ENCODE measurements at regions of chr4 and their contacts with region 1.

Region 1: DNA sequence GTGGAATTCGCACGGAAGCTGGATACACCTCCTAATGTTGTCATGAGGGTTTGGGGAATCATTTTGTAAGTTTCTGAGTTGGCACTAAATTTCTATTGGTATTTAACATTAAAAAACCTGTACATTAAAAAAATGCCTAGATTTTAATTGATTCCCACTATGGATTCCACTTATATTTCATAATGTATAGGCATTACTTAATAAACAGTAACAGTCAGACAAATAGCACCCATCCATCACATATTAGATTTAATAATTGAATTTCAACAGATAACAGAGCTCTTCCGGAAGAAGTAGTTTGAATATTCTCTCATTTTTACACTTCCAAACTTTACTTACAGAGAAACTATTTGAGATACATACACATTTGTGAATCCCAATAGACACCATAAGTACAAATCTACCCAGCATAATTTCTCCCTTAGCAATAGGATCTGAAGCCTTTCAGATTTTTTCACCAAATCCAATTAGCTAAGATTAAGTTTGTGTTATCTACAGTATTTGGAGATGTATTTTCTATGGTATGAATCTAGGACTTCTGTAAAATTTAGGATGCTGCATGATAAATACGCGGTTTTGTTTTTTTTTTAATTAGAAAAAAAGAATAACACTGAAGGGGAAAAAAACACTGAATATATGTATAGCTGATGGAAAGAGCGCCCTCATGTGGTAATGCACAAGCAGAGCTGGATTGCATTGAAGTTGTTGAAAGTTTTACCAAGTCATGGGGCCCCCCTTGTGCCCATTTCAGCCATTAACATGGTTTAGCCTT is 12.2 kb upstream of the ODAM start:
- DNase-seq: peak; percentile 57 to 71
- H3K4me3 ChIP-seq: no peak overlapping the region
- H3K4me3 Mint-ChIP-seq: peak overlapping the region; percentile 68
- H3K27ac Mint-ChIP-seq: peak overlapping the region; percentile 90
- H3K4me1 ChIP-seq: peaks cover 39% of the 10 kb centered on the region
- H3K4me1 Mint-ChIP-seq: peaks cover 37% of the 10 kb centered on the region
- H3K27me3 ChIP-seq: no peaks in the 10 kb centered on the region
- H3K27me3 Mint-ChIP-seq: no peaks in the 10 kb centered on the region
- CTCF ChIP-seq: peak; percentile 58 to 82

Region 2: DNA sequence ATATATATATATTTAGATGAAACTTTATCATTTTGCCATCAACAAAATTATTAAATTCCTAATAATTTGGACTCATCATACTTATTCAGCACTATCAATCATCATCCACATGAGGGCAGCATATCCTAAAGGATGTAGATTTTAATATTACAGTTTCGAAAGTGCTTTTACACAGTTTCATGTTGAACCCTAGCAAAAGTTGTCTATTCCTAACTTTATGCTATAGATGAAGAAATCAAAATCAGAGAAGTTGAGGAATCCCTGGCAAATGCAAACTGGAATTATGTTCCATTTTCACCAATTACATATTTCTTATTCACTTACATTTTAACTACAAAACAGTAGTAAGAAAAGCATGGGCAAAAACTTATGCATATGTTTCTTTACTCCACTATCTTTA is 493.8 kb before region 1 on chr4:
- CTCF ChIA-PET with region 1: no interaction called
- POLR2A ChIA-PET with region 1: no interaction called
- intact Hi-C with region 1: loop called (anchors 2 kb)
- DNase-seq: peak in 1 of 2 experiments; percentile 37
- H3K4me3 ChIP-seq: no peak overlapping the region
- H3K4me3 Mint-ChIP-seq: no peak overlapping the region
- H3K27ac Mint-ChIP-seq: no peak overlapping the region
- H3K4me1 ChIP-seq: peaks cover 11% of the 10 kb centered on the region; the same call in 1 of the 2 replicates
- H3K4me1 Mint-ChIP-seq: peaks cover 6% of the 10 kb centered on the region
- H3K27me3 ChIP-seq: no peaks in the 10 kb centered on the region
- H3K27me3 Mint-ChIP-seq: no peaks in the 10 kb centered on the region
- CTCF ChIP-seq: peak; percentile 47 to 71

Region 3: DNA sequence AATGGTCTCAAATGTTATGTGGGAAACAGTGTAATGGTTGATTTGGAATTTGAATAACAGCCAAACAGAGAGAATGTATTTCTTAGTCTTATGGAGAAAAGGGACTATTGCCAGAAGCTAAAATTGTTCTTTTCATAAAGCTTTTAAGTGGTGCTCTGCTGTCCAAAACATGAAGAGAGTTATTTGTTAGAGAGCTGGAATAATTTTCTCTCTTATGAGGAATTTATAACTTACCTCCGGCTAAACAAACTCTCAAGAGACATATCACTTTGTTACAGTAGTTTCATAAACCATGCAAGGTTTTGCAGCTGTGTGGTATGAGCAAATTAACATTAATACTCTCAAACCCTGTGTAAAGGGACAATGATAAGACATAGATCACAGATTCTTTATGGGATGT is 451.5 kb before region 1 on chr4:
- CTCF ChIA-PET with region 1: no interaction called
- POLR2A ChIA-PET with region 1: no interaction called
- intact Hi-C with region 1: no loop called
- DNase-seq: no peak
- H3K4me3 ChIP-seq: no peak overlapping the region
- H3K4me3 Mint-ChIP-seq: no peak overlapping the region
- H3K27ac Mint-ChIP-seq: no peak overlapping the region
- H3K4me1 ChIP-seq: no peaks in the 10 kb centered on the region
- H3K4me1 Mint-ChIP-seq: no peaks in the 10 kb centered on the region
- H3K27me3 ChIP-seq: no peaks in the 10 kb centered on the region
- H3K27me3 Mint-ChIP-seq: no peaks in the 10 kb centered on the region
- CTCF ChIP-seq: no peak

Region 4: GRCh38 chr4:69823481-69824186 is 359.7 kb before region 1 on chr4:
- CTCF ChIA-PET with region 1: interaction called, 10 read pairs
- POLR2A ChIA-PET with region 1: no interaction called
- intact Hi-C with region 1: loop called (anchors 2 kb)
- DNase-seq: peak; percentile 76 to 82
- H3K4me3 ChIP-seq: no peak overlapping the region
- H3K4me3 Mint-ChIP-seq: no peak overlapping the region
- H3K27ac Mint-ChIP-seq: peak overlapping the region; percentile 75
- H3K4me1 ChIP-seq: peaks cover 23% of the 10 kb centered on the region
- H3K4me1 Mint-ChIP-seq: peaks cover 6% of the 10 kb centered on the region
- H3K27me3 ChIP-seq: no peaks in the 10 kb centered on the region
- H3K27me3 Mint-ChIP-seq: no peaks in the 10 kb centered on the region
- CTCF ChIP-seq: peak; percentile 56 to 73

Region 5: GRCh38 chr4:69896530-69897116 is 286.7 kb before region 1 on chr4:
- CTCF ChIA-PET with region 1: interaction called, 15 read pairs
- POLR2A ChIA-PET with region 1: no interaction called
- intact Hi-C with region 1: loop called (anchors 1 kb)
- DNase-seq: no peak
- H3K4me3 ChIP-seq: no peak overlapping the region
- H3K4me3 Mint-ChIP-seq: no peak overlapping the region
- H3K27ac Mint-ChIP-seq: no peak overlapping the region
- H3K4me1 ChIP-seq: peaks cover 14% of the 10 kb centered on the region
- H3K4me1 Mint-ChIP-seq: peaks cover 13% of the 10 kb centered on the region
- H3K27me3 ChIP-seq: no peaks in the 10 kb centered on the region
- H3K27me3 Mint-ChIP-seq: no peaks in the 10 kb centered on the region
- CTCF ChIP-seq: peak; percentile 41 to 50

Region 6: DNA sequence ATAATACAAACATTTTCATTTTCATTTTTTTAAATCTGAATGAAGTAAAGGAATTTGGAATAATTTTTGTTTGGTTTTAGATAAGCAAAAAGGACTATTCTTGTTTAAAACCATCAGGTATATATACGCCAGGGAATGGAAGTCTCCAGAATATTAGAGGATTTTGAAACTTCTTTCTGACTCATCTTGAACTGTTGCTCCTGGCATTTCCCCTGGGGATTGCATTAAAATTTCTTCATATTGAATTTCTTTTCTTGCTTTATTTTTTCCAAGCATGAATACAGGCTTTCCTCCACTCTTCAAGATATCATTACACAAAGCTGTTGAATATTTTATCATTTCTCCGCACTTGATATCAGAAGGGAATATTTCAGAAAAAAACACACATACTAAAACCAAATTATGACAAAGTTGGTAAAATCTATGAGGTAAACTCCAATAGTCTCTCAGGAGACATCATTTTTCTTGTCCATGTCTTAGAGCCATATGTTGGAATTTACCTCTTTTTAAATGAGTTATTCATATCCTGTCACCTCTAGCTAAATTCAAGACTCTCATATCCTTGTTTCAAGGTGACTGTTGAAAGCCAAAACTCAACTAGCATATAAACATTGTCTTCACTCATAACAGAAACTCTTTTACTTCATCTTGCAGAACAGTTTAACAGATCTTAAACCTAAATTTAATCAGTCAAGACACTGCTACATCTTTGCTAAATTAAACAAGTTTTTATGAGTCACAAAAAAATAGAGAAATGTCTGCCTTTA is 273.2 kb before region 1 on chr4:
- CTCF ChIA-PET with region 1: no interaction called
- POLR2A ChIA-PET with region 1: no interaction called
- intact Hi-C with region 1: no loop called
- DNase-seq: no peak
- H3K4me3 ChIP-seq: no peak overlapping the region
- H3K4me3 Mint-ChIP-seq: no peak overlapping the region
- H3K27ac Mint-ChIP-seq: no peak overlapping the region
- H3K4me1 ChIP-seq: no peaks in the 10 kb centered on the region
- H3K4me1 Mint-ChIP-seq: no peaks in the 10 kb centered on the region
- H3K27me3 ChIP-seq: no peaks in the 10 kb centered on the region
- H3K27me3 Mint-ChIP-seq: no peaks in the 10 kb centered on the region
- CTCF ChIP-seq: no peak

Region 7: DNA sequence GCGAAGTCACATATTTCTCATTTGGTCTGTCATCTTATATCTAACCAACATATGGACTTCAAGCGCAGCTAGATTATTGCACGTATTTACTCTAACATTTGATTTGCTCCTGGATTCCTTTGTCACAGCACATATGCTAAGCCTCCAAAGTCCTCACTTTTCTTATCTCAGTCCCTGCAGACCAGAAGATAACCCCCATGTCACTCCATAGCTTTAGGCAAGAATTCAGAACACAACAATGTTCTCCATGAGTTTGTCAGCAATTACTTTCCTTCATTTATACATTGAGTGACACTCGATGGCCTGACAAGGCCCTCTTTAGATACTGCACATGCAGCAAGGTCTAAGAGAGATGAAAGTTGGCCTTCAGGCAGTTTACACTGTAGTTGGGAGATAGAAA is 192.3 kb before region 1 on chr4:
- CTCF ChIA-PET with region 1: interaction called, 3 read pairs
- POLR2A ChIA-PET with region 1: no interaction called
- intact Hi-C with region 1: loop called (anchors 1 kb)
- DNase-seq: peak; percentile 66 to 69
- H3K4me3 ChIP-seq: no peak overlapping the region
- H3K4me3 Mint-ChIP-seq: peak overlapping the region; percentile 40
- H3K27ac Mint-ChIP-seq: peak overlapping the region; percentile 48
- H3K4me1 ChIP-seq: peaks cover 30% of the 10 kb centered on the region
- H3K4me1 Mint-ChIP-seq: peaks cover 19% of the 10 kb centered on the region
- H3K27me3 ChIP-seq: no peaks in the 10 kb centered on the region
- H3K27me3 Mint-ChIP-seq: no peaks in the 10 kb centered on the region
- CTCF ChIP-seq: no peak

Region 8: GRCh38 chr4:70133491-70133890 is 49.9 kb before region 1 on chr4:
- CTCF ChIA-PET with region 1: no interaction called
- POLR2A ChIA-PET with region 1: no interaction called
- intact Hi-C with region 1: loop called (anchors 1 kb)
- DNase-seq: peak in 1 of 2 experiments; percentile 30
- H3K4me3 ChIP-seq: no peak overlapping the region
- H3K4me3 Mint-ChIP-seq: no peak overlapping the region
- H3K27ac Mint-ChIP-seq: peak overlapping the region; percentile 25
- H3K4me1 ChIP-seq: 0 out of 2 replicates have a peak, but pooled peaks cover 10% of the 10 kb centered on the region
- H3K4me1 Mint-ChIP-seq: peaks cover 4% of the 10 kb centered on the region
- H3K27me3 ChIP-seq: no peaks in the 10 kb centered on the region
- H3K27me3 Mint-ChIP-seq: no peaks in the 10 kb centered on the region
- CTCF ChIP-seq: no peak

Region 9: GRCh38 chr4:70505151-70505748 is 321.9 kb after region 1 on chr4:
- CTCF ChIA-PET with region 1: no interaction called
- POLR2A ChIA-PET with region 1: no interaction called
- intact Hi-C with region 1: loop called (anchors 2 kb)
- DNase-seq: peak; percentile 43 to 71
- H3K4me3 ChIP-seq: no peak overlapping the region
- H3K4me3 Mint-ChIP-seq: no peak overlapping the region
- H3K27ac Mint-ChIP-seq: no peak overlapping the region
- H3K4me1 ChIP-seq: no peaks in the 10 kb centered on the region
- H3K4me1 Mint-ChIP-seq: no peaks in the 10 kb centered on the region
- H3K27me3 ChIP-seq: no peaks in the 10 kb centered on the region
- H3K27me3 Mint-ChIP-seq: no peaks in the 10 kb centered on the region
- CTCF ChIP-seq: peak; percentile 86 to 94